H1 (cell line): ENCODE measurements at regions of chr7 and their contacts with region 1.

Region 1: GRCh38 chr7:152859781-152860191 is 100.2 kb downstream of the ACTR3B start:
- DNase-seq: peak; percentile 25 to 63
- H3K4me3 ChIP-seq: no peak overlapping the region
- H3K27ac ChIP-seq: no peak overlapping the region
- H3K4me1 ChIP-seq: peaks cover 0 to 2% (median 0%) of the 10 kb centered on the region in 4 experiments; a peak in 1 of 7 replicates
- H3K27me3 ChIP-seq: no peaks in the 10 kb centered on the region
- CTCF ChIP-seq: peak; percentile 86 to 96 (median 87)
- EP300 ChIP-seq: no peak
- POLR2A ChIP-seq: no peak
- RAD21 ChIP-seq: peak; percentile 47 to 56; a peak in 2 of 4 replicates

Region 2: DNA sequence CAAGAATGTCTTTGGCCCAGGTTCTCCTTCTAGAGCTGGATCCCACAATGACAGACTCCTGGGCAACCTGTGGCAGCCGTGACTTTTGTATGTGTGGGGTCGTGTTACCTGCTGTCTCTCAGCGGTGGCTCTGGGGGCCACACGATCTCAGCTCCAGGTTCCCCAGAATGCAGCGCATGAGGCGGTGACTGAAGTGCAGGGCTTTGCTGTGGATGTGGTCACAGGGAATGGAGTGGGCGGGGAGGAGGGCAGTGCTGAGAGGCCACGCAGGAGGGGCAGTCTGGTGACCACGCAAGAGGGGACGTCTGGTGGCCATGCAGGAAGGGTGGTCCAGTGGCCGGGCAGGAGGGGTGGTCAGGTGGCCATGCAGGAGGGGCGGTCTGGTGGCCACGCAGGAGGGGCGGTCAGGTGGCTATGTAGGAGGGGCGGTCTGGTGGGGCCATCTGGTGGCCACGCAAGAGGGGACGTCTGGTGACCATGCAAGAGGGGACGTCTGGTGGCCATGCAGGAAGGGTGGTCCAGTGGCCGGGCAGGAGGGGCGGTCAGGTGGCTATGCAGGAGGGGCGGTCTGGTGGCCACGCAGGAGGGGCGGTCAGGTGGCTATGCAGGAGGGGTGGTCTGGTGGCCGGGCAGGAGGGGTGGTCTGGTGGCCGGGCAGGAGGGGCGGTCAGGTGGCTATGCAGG is 12.4 kb after region 1 on chr7:
- CTCF ChIA-PET with region 1: interaction called, 19 read pairs
- POLR2A ChIA-PET with region 1: no interaction called
- DNase-seq: no peak
- H3K4me3 ChIP-seq: no peak overlapping the region
- H3K27ac ChIP-seq: no peak overlapping the region
- H3K4me1 ChIP-seq: no peaks in the 10 kb centered on the region
- H3K27me3 ChIP-seq: no peaks in the 10 kb centered on the region
- CTCF ChIP-seq: no peak
- EP300 ChIP-seq: no peak
- POLR2A ChIP-seq: no peak
- RAD21 ChIP-seq: peak; percentile 12 to 15; a peak in 1 of 4 replicates

Region 3: GRCh38 chr7:152884321-152884720 is 24.5 kb after region 1 on chr7:
- CTCF ChIA-PET with region 1: no interaction called
- POLR2A ChIA-PET with region 1: no interaction called
- DNase-seq: no peak
- H3K4me3 ChIP-seq: no peak overlapping the region
- H3K27ac ChIP-seq: no peak overlapping the region; the same call in 1 of the 2 replicates
- H3K4me1 ChIP-seq: peaks cover 0 to 7% (median 1%) of the 10 kb centered on the region in 4 experiments; a peak in 2 of 7 replicates
- H3K27me3 ChIP-seq: no peaks in the 10 kb centered on the region
- CTCF ChIP-seq: no peak
- EP300 ChIP-seq: no peak
- POLR2A ChIP-seq: no peak
- RAD21 ChIP-seq: no peak